ENCODE measurements at regions of chr12 and their contacts with region 1.

Region 1: GRCh38 chr12:42482445-42483237 is 106.9 kb downstream of the PRICKLE1 start:
- DNase-seq: peak; percentile 72 to 94
- H3K4me3 ChIP-seq: peak overlapping the region; percentile 64 to 83 (median 68)
- H3K27ac ChIP-seq: peak overlapping the region; percentile 60 to 90 (median 82)
- H3K4me1 ChIP-seq: peaks cover 0 to 37% (median 23%) of the 10 kb centered on the region in 4 donors
- H3K27me3 ChIP-seq: peaks cover 0 to 11% (median 7%) of the 10 kb centered on the region in 3 donors
- CTCF ChIP-seq: peak in 5 of 7 experiments; percentile 66 to 92 (median 85)
- EP300 ChIP-seq: no peak
- POLR2A ChIP-seq: no peak

Region 2: DNA sequence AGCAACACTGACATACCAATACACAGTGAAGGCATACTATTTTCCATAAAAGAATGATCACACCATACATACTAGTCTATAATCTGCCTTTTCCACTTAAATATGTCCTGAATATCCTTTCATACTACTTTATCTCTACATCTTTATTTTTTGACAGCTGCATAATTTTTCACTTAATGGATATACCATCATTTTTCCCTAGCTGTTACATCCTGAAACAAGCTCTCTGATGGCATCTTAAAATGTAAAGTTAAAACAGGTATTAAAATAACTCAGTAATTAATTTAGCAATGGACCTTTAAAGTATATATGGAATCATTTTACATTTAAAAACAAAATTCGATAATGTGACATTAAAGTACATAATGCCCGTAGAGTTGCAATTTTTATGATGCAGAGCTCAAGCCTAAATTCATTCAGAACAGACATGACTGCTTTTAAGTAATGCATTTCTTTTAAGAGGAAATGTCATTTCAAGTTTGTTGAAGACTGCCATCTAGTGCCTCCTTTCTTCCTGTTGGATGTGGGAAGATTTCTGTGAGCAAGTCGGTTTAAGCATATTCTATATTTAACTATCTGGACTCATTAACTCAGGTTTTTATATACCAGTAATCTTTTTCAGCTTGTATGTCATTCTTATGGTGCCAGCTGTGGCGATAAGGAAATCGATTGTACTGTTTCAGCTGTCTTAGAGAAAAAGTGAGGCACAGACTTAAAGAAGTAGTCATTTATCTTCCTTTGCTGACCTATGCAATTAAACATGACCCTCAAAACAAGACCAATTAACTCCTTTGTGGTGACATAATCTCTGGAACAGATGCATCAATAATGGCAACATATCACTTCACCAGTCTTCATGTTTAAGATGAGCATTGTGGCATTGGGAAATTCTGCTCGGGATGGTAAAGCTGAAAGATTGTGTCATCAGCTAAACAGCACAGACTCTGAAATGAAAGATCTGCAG is 86.6 kb after region 1 on chr12:
- intact Hi-C with region 1: loop called (anchors 5 kb)
- DNase-seq: peak in 1 of 2 donors; percentile 80
- H3K4me3 ChIP-seq: no peak overlapping the region
- H3K27ac ChIP-seq: peak overlapping the region; percentile 20 to 86 (median 57)
- H3K4me1 ChIP-seq: peaks cover 0 to 37% (median 19%) of the 10 kb centered on the region in 4 donors
- H3K27me3 ChIP-seq: no peaks in the 10 kb centered on the region
- CTCF ChIP-seq: peak in 4 of 7 experiments; percentile 35 to 62 (median 43)
- EP300 ChIP-seq: no peak
- POLR2A ChIP-seq: no peak